ENCODE measurements at regions of chr3 and their contacts with region 1.

Region 1: GRCh38 chr3:20185701-20186598 is at the start of gene SGO1:
- DNase-seq: peak; percentile 97 to 100 (median 99)
- H3K4me3 ChIP-seq: peak within 1 kb of the TSS; percentile 75 to 90 (median 82)
- H3K4me3 Mint-ChIP-seq: no peak within 1 kb of the TSS
- H3K27ac ChIP-seq: peak within 1 kb of the TSS; percentile 67 to 95
- H3K27ac Mint-ChIP-seq: no peak within 1 kb of the TSS
- H3K4me1 ChIP-seq: peaks cover 14 to 18% of the 10 kb centered on the region in 2 donors
- H3K4me1 Mint-ChIP-seq: peaks cover 2% of the 10 kb centered on the region
- H3K27me3 ChIP-seq: no peaks in the 10 kb centered on the region
- H3K27me3 Mint-ChIP-seq: no peaks in the 10 kb centered on the region
- CTCF ChIP-seq: no peak
- polyA plus RNA-seq, gene SGO1: 0.07 to 0.42 (median 0.15) TPM

Region 2: DNA sequence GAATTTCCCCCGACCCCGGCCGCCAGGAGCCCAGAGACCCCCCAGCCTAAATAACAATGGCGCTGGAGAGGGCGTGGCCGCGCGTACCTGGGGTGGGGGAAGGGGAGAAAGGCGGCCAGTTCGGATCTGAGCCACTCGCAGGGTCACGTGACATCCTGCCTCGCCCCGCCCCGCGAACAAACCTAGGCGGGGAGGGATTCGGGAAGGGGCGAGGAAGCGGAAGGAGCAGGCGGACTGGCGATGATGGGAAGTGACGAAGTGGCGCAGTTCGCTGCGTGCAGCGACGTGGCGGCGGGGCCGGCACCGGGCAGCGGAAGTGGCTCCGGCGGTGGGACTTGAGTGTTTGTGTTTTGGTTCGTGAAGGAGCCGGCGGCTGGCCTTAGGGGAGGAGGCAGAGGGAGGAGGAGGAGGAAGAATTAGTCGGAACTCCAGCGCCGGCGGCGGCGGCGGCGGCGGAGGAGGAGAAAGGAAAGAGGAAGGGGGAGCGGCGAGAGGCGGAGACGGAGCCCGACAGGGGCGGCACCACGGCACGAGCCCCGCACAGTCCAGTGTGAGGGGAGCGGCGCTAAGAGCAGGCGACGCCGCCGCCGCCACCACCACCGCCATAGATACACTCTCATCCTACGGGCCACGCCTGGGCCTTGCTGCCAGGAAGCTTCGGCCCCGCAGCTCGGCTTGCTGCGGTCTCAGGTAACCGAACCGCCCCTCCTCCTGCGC is 239.0 kb before region 1 on chr3 and contains the start of gene RAB5A:
- intact Hi-C with region 1: loop called (anchors 2 kb)
- DNase-seq: peak; percentile 97 to 99 (median 98)
- H3K4me3 ChIP-seq: peak within 1 kb of the TSS; percentile 75 to 96 (median 95)
- H3K4me3 Mint-ChIP-seq: peak within 1 kb of the TSS; percentile 98
- H3K27ac ChIP-seq: peak within 1 kb of the TSS; percentile 98 to 99
- H3K27ac Mint-ChIP-seq: peak within 1 kb of the TSS; percentile 97 to 99 (median 98)
- H3K4me1 ChIP-seq: peaks cover 20 to 32% of the 10 kb centered on the region in 2 donors
- H3K4me1 Mint-ChIP-seq: peaks cover 38% of the 10 kb centered on the region
- H3K27me3 ChIP-seq: no peaks in the 10 kb centered on the region
- H3K27me3 Mint-ChIP-seq: no peaks in the 10 kb centered on the region
- CTCF ChIP-seq: no peak
- polyA plus RNA-seq, gene RAB5A: 25.7 to 60.2 (median 33.8) TPM

Region 3: DNA sequence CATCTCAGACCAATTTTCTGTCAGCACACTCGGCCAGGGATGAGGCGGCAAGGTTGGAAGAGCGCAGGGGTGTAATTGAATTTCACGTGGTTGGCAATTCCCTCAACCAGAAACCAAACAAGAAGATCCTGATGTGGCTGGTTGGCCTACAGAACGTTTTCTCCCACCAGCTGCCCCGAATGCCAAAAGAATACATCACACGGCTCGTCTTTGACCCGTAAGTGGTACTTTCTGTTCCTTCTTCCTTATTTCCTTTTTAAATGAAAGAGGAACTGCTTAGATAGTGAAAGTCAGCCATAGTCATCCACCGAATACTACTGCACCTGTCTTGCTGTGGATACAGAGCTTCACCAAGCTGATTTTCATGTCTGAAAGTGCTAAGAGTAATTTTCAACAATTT is 60.1 kb before region 1 on chr3:
- intact Hi-C with region 1: loop called in 1 of 2 experiments (anchors 10 kb)
- DNase-seq: peak; percentile 58 to 80 (median 79)
- H3K4me3 ChIP-seq: peak overlapping the region in 2 of 3 experiments; percentile 51 to 60
- H3K4me3 Mint-ChIP-seq: peak overlapping the region; percentile 67 to 87
- H3K27ac ChIP-seq: peak overlapping the region; percentile 68 to 79
- H3K27ac Mint-ChIP-seq: peak overlapping the region; percentile 83 to 96 (median 93)
- H3K4me1 ChIP-seq: peaks cover 12 to 13% of the 10 kb centered on the region in 2 donors
- H3K4me1 Mint-ChIP-seq: peaks cover 10% of the 10 kb centered on the region
- H3K27me3 ChIP-seq: no peaks in the 10 kb centered on the region
- H3K27me3 Mint-ChIP-seq: peaks cover 0 to 1% (median 0%) of the 10 kb centered on the region in 3 donors
- CTCF ChIP-seq: no peak